Endothelial cell of umbilical vein (primary cell): ENCODE measurements at regions of chr16 and their contacts with region 1.

Region 1: DNA sequence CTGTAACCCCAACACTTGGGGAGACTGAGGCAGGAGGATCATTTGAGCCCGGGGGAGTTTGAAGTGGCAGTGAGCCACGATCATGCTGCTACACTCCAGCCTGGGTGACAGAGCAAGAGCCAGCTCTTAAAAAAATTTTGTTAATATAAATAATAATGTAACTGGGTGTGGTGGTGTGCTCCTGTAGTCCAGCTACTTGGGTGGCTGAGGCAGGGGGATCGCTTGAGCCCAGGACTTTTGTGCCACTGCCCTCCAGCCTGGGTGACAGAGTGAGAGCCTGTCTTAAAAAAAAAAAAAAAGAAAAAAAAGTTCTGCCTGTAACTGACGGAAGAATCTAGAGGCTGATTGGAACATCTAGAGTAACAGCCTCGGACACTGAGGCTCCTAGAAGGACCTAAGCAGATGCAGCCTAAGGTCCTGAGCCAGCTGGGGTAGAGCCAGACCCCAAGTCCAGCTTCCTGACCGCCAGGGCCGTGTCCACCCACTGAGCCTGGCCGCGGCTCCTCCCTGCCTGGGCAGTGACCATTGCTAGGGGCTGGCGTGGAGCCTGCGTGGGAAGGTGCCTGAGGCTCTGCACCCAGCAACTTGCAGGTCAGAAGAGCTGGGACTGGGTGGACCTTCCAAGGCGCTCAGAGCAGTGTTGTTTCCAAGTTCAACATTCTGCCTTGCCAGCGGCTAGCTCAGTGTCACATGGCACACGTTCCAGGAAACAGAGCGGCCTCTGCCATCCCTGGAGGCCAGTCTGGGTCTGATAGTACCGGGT is 209.4 kb upstream of the CIBAR2 start:
- DNase-seq: peak; percentile 75
- H3K4me3 ChIP-seq: no peak overlapping the region
- H3K27ac ChIP-seq: no peak overlapping the region
- H3K4me1 ChIP-seq: peaks cover 9% of the 10 kb centered on the region
- H3K27me3 ChIP-seq: no peaks in the 10 kb centered on the region
- CTCF ChIP-seq: no peak
- POLR2A ChIP-seq: no peak

Region 2: GRCh38 chr16:85305996-85306792 is 15.5 kb before region 1 on chr16:
- CTCF ChIA-PET with region 1: interaction called, 10 read pairs
- POLR2A ChIA-PET with region 1: interaction called, 7 read pairs
- dilution Hi-C with region 1: no loop called
- intact Hi-C with region 1: no loop called
- DNase-seq: peak; percentile 92
- H3K4me3 ChIP-seq: no peak overlapping the region
- H3K27ac ChIP-seq: no peak overlapping the region
- H3K4me1 ChIP-seq: peaks cover 14% of the 10 kb centered on the region
- H3K27me3 ChIP-seq: no peaks in the 10 kb centered on the region
- CTCF ChIP-seq: no peak
- POLR2A ChIP-seq: no peak

Region 3: DNA sequence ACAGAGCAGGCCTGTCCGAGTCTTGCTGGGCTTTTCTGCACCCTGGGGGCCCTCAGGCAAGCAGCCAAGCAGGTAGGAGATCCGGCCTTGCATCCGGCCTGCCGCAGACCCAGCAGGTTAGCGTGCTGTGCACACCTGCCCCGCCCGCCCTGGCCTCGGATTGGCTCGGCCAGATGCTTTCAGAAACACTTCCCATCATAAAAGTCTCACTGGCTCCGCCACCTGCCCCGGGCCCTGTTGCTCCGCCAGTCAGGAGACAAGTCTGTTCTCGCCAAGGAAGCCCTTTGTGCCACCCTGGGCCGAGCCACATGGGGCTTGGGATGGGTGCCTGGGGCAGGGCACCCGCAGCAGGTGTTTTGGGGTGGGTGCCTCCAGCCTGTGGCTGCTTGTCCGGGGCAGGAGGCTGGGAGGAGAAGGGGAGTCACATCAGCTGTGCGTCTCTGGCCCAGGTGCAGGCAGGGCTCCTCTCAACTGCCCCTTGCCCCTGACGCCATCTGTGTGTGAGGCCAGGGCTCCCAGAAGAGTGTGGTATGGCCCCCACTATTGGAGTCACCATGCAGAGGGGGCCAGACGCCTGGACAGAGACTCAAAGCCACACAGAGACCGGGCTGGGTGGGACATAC is 63.3 kb after region 1 on chr16:
- CTCF ChIA-PET with region 1: no interaction called
- POLR2A ChIA-PET with region 1: no interaction called
- dilution Hi-C with region 1: no loop called
- intact Hi-C with region 1: no loop called
- DNase-seq: no peak
- H3K4me3 ChIP-seq: no peak overlapping the region
- H3K27ac ChIP-seq: no peak overlapping the region
- H3K4me1 ChIP-seq: no peaks in the 10 kb centered on the region
- H3K27me3 ChIP-seq: no peaks in the 10 kb centered on the region
- CTCF ChIP-seq: no peak
- POLR2A ChIP-seq: no peak

Region 4: GRCh38 chr16:85986931-85987749 is 665.5 kb after region 1 on chr16:
- CTCF ChIA-PET with region 1: no interaction called
- POLR2A ChIA-PET with region 1: no interaction called
- dilution Hi-C with region 1: no loop called
- intact Hi-C with region 1: no loop called
- DNase-seq: no peak
- H3K4me3 ChIP-seq: no peak overlapping the region
- H3K27ac ChIP-seq: no peak overlapping the region
- H3K4me1 ChIP-seq: no peaks in the 10 kb centered on the region
- H3K27me3 ChIP-seq: peaks cover 0 to 5% of the 10 kb centered on the region in 2 experiments
- CTCF ChIP-seq: peak in 1 of 2 donors; percentile 50
- POLR2A ChIP-seq: no peak